Sciatic nerve (tissue), 2 donors: ENCODE measurements at regions of chr16 and their contacts with region 1.

Region 1: DNA sequence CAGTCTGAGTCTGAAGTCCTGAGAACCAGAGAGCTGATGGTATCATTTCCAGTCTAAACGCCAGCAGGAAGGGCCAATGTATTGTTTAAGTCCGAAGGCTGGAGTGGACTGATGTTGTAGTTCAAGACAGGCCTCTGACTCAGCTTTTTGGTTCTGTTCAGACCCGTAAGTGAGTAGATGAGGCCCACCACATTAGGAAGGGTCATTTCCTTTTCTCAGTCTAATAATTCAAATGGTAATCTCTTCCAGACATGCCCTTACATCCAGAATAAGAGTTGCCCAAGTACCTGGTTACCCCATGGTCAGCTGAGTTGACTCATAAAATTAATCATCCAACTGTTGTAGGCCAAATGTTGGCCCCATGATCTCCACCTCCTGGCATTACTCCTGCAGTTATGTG is 442.6 kb upstream of the HSBP1 start:
- DNase-seq: no peak
- ATAC-seq: no peak

Region 2: GRCh38 chr16:83336630-83337029 is 28.5 kb before region 1 on chr16:
- intact Hi-C with region 1: no loop called
- DNase-seq: no peak
- ATAC-seq: no peak

Region 3: GRCh38 chr16:83425248-83425647 is 60.1 kb after region 1 on chr16:
- intact Hi-C with region 1: loop called (anchors 5 kb)
- DNase-seq: no peak
- ATAC-seq: no peak